ENCODE measurements at regions of chr20 and their contacts with region 1.

Region 1: GRCh38 chr20:3000852-3001523 is 42.4 kb upstream of the GNRH2 start:
- DNase-seq: peak; percentile 75
- ATAC-seq: peak; percentile 95
- H3K4me3 ChIP-seq: no peak overlapping the region
- H3K27ac ChIP-seq: no peak overlapping the region
- H3K4me1 ChIP-seq: no peaks in the 10 kb centered on the region
- H3K27me3 ChIP-seq: no peaks in the 10 kb centered on the region
- CTCF ChIP-seq: peak; percentile 74
- POLR2A ChIP-seq: no peak
- RAD21 ChIP-seq: peak; percentile 77

Region 2: DNA sequence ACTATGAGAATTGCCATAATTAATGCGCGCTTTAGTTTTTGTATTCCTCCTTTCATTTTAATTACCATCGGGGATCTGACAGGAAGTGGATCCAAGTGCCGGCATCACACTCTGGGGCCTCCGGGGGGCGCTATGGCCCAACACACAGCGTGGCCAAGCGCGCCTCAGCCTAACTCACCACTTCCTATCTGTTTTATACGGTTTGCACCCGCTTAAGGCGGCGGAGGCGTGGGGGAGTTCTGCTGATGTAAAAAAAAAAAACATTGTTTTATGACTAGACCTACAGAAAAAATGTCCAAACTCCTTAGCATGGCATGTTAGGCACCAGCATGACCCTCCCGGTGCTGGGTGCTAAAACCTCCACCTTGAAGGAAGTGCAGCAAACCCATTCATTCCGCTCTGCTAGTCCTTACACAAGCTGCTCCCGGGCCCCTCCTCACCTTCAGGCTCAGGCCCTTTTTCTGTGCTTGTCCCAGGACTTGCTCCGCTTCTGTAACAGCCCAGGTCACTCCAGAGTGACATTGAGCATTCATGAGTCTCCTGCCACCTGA is 312.9 kb before region 1 on chr20:
- CTCF ChIA-PET with region 1: interaction called, 3 read pairs
- POLR2A ChIA-PET with region 1: no interaction called
- dilution Hi-C with region 1: no loop called
- in situ Hi-C with region 1: no loop called
- intact Hi-C with region 1: loop called (anchors 2 kb)
- DNase-seq: peak; percentile 29
- ATAC-seq: peak; percentile 47; the same call in 1 of the 2 replicates
- H3K4me3 ChIP-seq: no peak overlapping the region
- H3K27ac ChIP-seq: no peak overlapping the region
- H3K4me1 ChIP-seq: no peaks in the 10 kb centered on the region
- H3K27me3 ChIP-seq: peaks cover 39% of the 10 kb centered on the region
- CTCF ChIP-seq: peak; percentile 68
- POLR2A ChIP-seq: no peak
- RAD21 ChIP-seq: peak; percentile 77

Region 3: GRCh38 chr20:2752567-2753460 is 248.2 kb before region 1 on chr20:
- CTCF ChIA-PET with region 1: interaction called, 4 read pairs
- POLR2A ChIA-PET with region 1: no interaction called
- dilution Hi-C with region 1: no loop called
- in situ Hi-C with region 1: loop called (anchors 10 kb)
- intact Hi-C with region 1: loop called (anchors 1 kb)
- DNase-seq: peak; percentile 30
- ATAC-seq: peak; percentile 38
- H3K4me3 ChIP-seq: peak overlapping the region; percentile 30
- H3K27ac ChIP-seq: no peak overlapping the region
- H3K4me1 ChIP-seq: peaks cover 8% of the 10 kb centered on the region; the same call in 1 of the 2 replicates
- H3K27me3 ChIP-seq: peaks cover 60% of the 10 kb centered on the region
- CTCF ChIP-seq: peak; percentile 68
- POLR2A ChIP-seq: no peak
- RAD21 ChIP-seq: peak; percentile 44

Region 4: DNA sequence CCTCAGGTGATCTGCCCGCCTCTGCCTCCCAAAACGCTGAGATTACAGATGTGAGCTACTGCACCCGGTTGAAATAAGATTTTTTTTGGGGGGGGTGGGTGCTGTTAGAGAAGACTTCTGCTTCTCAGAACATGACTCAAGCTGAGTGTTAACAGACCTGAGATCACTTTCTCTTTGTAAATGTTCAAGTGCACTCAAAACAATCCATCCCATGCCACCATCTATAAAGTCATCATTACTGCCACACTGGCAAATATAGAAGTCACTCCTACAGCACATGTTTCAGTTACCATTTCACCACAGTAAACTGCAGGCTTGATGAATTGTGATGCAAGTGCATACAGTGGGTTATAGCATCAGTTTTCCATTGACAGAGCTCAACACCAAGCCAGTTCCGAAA is 151.5 kb before region 1 on chr20:
- CTCF ChIA-PET with region 1: interaction called, 6 read pairs
- POLR2A ChIA-PET with region 1: no interaction called
- dilution Hi-C with region 1: no loop called
- in situ Hi-C with region 1: no loop called
- intact Hi-C with region 1: loop called (anchors 2 kb)
- DNase-seq: no peak
- ATAC-seq: no peak
- H3K4me3 ChIP-seq: no peak overlapping the region
- H3K27ac ChIP-seq: no peak overlapping the region
- H3K4me1 ChIP-seq: peaks cover 3% of the 10 kb centered on the region; the same call in 1 of the 2 replicates
- H3K27me3 ChIP-seq: no peaks in the 10 kb centered on the region
- CTCF ChIP-seq: no peak
- POLR2A ChIP-seq: no peak
- RAD21 ChIP-seq: no peak

Region 5: DNA sequence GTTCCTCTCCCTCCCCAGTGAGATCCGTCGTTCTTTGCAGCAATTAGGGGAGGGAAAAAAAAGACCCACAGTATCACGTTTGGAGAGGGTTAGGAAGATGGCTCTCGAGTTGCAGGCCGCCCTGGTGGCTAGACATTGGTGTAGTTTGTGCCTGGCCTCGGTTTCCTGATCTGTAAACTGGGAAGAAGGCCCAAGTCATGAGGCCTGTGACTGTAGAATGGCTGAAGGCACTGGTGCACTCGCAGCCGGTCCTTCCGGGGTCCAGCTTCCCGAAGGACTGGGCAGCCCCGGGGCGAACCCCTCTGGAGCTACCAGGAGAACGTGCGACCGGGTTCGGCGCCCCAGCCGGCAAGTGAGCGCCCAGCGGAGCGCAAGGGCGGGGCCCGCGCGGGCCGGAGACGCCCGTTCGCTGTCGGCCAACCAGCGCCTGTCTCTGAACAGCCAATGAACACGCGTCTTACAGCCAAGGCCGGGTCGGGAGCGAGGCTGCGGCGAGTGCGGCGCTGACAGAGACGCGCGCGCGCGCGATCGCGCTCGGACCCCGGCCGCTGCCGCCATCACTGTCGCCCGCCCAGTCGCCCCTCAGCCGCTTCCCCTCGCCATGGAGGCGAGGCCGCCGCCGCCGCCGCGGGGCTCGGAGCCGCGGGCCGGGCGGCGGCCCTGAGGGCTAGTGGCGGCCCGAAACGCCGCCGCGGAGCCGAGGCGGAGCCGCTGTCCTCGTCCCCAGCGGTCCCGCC is 127.8 kb before region 1 on chr20 and contains the start of gene PTPRA:
- CTCF ChIA-PET with region 1: interaction called, 4 read pairs
- POLR2A ChIA-PET with region 1: no interaction called
- dilution Hi-C with region 1: no loop called
- in situ Hi-C with region 1: loop called (anchors 10 kb)
- intact Hi-C with region 1: loop called (anchors 2 kb)
- DNase-seq: peak; percentile 88
- ATAC-seq: peak; percentile 95
- H3K4me3 ChIP-seq: peak within 1 kb of the TSS; percentile 97
- H3K27ac ChIP-seq: peak within 1 kb of the TSS; percentile 45
- H3K4me1 ChIP-seq: peaks cover 14% of the 10 kb centered on the region
- H3K27me3 ChIP-seq: no peaks in the 10 kb centered on the region
- CTCF ChIP-seq: no peak
- POLR2A ChIP-seq: peak; percentile 80
- RAD21 ChIP-seq: no peak
- total RNA-seq, gene PTPRA: 44.4 and 50.0 TPM in 2 replicates

Region 6: GRCh38 chr20:2879146-2879545 is 121.8 kb before region 1 on chr20:
- CTCF ChIA-PET with region 1: no interaction called
- POLR2A ChIA-PET with region 1: no interaction called
- dilution Hi-C with region 1: no loop called
- in situ Hi-C with region 1: loop called (anchors 10 kb)
- intact Hi-C with region 1: loop called (anchors 2 kb)
- DNase-seq: peak; percentile 93
- ATAC-seq: peak; percentile 92
- H3K4me3 ChIP-seq: no peak overlapping the region
- H3K27ac ChIP-seq: no peak overlapping the region
- H3K4me1 ChIP-seq: peaks cover 7% of the 10 kb centered on the region; the same call in 1 of the 2 replicates
- H3K27me3 ChIP-seq: no peaks in the 10 kb centered on the region
- CTCF ChIP-seq: no peak
- POLR2A ChIP-seq: no peak
- RAD21 ChIP-seq: no peak